PC-3 (cell line): ENCODE measurements at regions of chr4 and their contacts with region 1.

Region 1: GRCh38 chr4:27702730-27703431 is 842.2 kb downstream of the STIM2 start:
- DNase-seq: peak; percentile 49
- ATAC-seq: peak; percentile 88
- H3K4me3 ChIP-seq: no peak overlapping the region
- H3K27ac ChIP-seq: no peak overlapping the region
- H3K4me1 ChIP-seq: peaks cover 6% of the 10 kb centered on the region; the same call in 1 of the 2 replicates
- H3K27me3 ChIP-seq: no peaks in the 10 kb centered on the region
- CTCF ChIP-seq: peak; percentile 63

Region 2: DNA sequence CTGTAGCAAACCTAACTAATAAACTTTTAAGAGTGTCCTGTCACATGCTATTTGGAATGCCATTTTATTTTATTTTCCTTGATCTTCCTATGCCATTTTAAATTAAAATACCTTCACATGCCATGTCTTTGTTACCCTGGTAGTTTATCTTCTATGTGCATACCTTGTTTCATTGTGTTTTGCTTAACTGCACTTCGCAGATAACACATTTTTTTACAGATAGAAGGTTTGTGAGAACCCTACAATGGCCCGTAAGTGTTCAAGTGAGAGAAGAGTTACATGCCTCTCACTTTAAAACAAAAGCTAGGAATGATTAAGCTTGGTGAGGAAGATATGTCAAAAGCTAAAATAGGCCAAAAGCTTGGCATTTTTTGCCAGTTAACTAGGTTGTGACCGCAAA is 98.2 kb before region 1 on chr4:
- CTCF ChIA-PET with region 1: no interaction called
- POLR2A ChIA-PET with region 1: no interaction called
- intact Hi-C with region 1: no loop called
- DNase-seq: no peak
- ATAC-seq: no peak
- H3K4me3 ChIP-seq: no peak overlapping the region
- H3K27ac ChIP-seq: no peak overlapping the region
- H3K4me1 ChIP-seq: no peaks in the 10 kb centered on the region
- H3K27me3 ChIP-seq: no peaks in the 10 kb centered on the region
- CTCF ChIP-seq: no peak

Region 3: GRCh38 chr4:27720010-27720766 is 17.3 kb after region 1 on chr4:
- CTCF ChIA-PET with region 1: no interaction called
- POLR2A ChIA-PET with region 1: no interaction called
- intact Hi-C with region 1: no loop called
- DNase-seq: no peak
- ATAC-seq: no peak
- H3K4me3 ChIP-seq: no peak overlapping the region
- H3K27ac ChIP-seq: no peak overlapping the region
- H3K4me1 ChIP-seq: no peaks in the 10 kb centered on the region
- H3K27me3 ChIP-seq: no peaks in the 10 kb centered on the region
- CTCF ChIP-seq: no peak

Region 4: DNA sequence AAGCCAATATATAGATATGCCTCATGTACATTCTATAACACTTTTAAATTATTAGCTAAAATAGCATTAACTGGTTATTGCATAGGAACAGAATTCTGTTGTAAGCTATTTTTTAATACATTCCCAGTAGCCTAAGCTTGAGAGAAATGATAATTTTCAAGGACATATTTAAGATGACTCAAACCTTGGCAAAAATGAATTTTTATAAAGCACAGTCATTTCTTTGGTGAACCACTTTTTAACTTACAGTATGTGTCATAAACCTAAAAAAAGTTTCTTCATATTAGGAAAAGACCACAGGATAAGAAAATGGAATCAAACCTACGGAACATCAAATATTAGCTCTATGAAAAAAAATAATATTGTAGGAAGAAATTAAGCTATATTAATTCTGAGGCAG is 144.1 kb after region 1 on chr4:
- CTCF ChIA-PET with region 1: no interaction called
- POLR2A ChIA-PET with region 1: no interaction called
- intact Hi-C with region 1: loop called (anchors 5 kb)
- DNase-seq: no peak
- ATAC-seq: no peak
- H3K4me3 ChIP-seq: no peak overlapping the region
- H3K27ac ChIP-seq: no peak overlapping the region
- H3K4me1 ChIP-seq: no peaks in the 10 kb centered on the region
- H3K27me3 ChIP-seq: no peaks in the 10 kb centered on the region
- CTCF ChIP-seq: no peak